ENCODE measurements at regions of chr21 and their contacts with region 1.

Region 1: DNA sequence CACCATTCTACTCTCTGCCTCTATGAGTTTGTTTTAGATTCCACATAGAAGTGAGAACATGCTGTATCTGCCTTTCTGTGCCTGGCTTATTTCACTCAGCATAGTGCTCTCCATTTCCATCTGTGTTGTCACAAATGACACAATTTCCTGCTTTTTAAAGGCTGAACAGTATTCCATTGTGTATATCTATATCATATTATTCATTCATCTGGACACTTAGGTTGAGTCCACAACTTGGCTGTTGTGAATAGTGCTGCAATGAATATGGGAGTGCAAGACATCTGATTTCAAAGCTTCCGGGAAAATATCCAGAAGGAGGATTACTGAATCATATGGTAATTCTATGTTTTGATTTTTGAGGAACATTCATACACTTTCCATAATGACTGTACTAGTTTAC is 20.1 kb upstream of the DONSON start:
- DNase-seq: no peak
- ATAC-seq: no peak
- H3K4me3 ChIP-seq: no peak overlapping the region
- H3K27ac ChIP-seq: no peak overlapping the region
- H3K4me1 ChIP-seq: peaks cover 8% of the 10 kb centered on the region
- H3K27me3 ChIP-seq: no peaks in the 10 kb centered on the region
- CTCF ChIP-seq: no peak

Region 2: DNA sequence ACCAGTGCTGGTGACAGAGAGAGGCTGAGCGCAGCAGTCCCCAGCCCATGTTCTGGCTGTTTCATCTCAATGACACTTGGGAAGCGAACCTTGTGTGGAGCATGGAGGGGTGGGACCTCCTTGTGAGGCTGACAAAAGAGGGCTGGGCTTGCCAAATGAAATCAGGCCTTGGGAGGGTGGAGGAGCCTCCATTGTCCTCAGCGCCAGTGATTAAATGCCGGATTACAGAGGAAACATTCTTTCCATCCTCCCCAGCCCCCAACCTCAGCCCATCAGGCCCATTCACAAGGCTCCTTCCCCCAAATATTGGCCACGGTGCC is 773.7 kb before region 1 on chr21:
- intact Hi-C with region 1: loop called in 1 of 2 experiments (anchors 10 kb)
- DNase-seq: no peak
- ATAC-seq: no peak
- H3K4me3 ChIP-seq: no peak overlapping the region
- H3K27ac ChIP-seq: no peak overlapping the region
- H3K4me1 ChIP-seq: no peaks in the 10 kb centered on the region
- H3K27me3 ChIP-seq: peaks cover 0 to 2% (median 0%) of the 10 kb centered on the region in 3 donors
- CTCF ChIP-seq: no peak

Region 3: DNA sequence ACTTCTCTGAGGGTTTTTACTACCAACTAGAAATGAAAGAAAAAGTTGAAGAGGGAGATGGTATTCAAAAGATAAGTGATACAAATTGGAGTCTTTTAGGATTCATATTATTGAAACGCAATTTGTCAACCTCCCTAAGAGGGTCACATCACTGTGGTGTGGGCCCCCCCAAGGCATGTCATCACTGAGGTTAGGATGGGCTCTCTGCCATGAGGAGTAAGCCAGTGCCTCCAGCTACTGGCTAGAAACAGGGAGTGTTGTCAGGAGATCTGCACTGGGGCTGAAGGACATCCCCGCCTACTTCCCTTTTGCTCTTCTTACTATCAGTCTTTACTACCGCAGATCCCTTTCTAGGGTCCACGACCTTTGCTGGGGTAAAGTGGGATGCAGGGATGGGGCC is 59.6 kb after region 1 on chr21:
- intact Hi-C with region 1: no loop called
- DNase-seq: no peak
- ATAC-seq: no peak
- H3K4me3 ChIP-seq: no peak overlapping the region
- H3K27ac ChIP-seq: no peak overlapping the region
- H3K4me1 ChIP-seq: peaks cover 27% of the 10 kb centered on the region
- H3K27me3 ChIP-seq: no peaks in the 10 kb centered on the region
- CTCF ChIP-seq: no peak